Mammary epithelial cell (primary cell): ENCODE measurements at regions of chr3 and their contacts with region 1.

Region 1: DNA sequence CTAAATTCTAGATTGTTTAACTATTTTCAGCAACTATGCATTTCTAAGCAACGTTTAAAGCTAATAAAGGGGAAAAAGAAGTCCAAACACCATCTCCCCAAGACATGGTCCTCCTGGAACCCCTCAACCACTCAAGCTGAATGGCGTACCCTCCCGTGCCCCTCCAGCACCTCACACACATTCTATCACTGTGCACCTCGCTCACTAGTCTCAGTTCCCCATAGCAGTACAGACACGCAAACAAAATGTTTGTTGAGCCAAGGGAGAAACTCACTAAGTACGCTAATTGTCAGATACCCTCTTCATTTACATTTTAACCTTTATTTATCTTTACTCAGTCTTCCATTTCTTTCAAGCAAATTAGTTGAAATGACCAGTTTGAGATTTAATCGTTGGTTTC is 48.8 kb downstream of the ACAP2 start:
- DNase-seq: no peak
- H3K4me3 ChIP-seq: no peak overlapping the region
- H3K27ac ChIP-seq: no peak overlapping the region
- H3K4me1 ChIP-seq: peaks cover 4% of the 10 kb centered on the region
- H3K27me3 ChIP-seq: no peaks in the 10 kb centered on the region
- CTCF ChIP-seq: no peak

Region 2: GRCh38 chr3:195297446-195297845 is 96.6 kb before region 1 on chr3:
- CTCF ChIA-PET with region 1: no interaction called
- dilution Hi-C with region 1: loop called (anchors 5 kb)
- in situ Hi-C with region 1: no loop called
- intact Hi-C with region 1: no loop called
- DNase-seq: no peak
- H3K4me3 ChIP-seq: no peak overlapping the region
- H3K27ac ChIP-seq: no peak overlapping the region
- H3K4me1 ChIP-seq: no peaks in the 10 kb centered on the region
- H3K27me3 ChIP-seq: no peaks in the 10 kb centered on the region
- CTCF ChIP-seq: no peak